Heart right ventricle (tissue), 16 donors: ENCODE measurements at regions of chr3 and their contacts with region 1.

Region 1: GRCh38 chr3:98901392-98902350 is at the start of gene DCBLD2:
- DNase-seq: peak; percentile 97 to 99
- ATAC-seq: peak; percentile 98 to 99 (median 99)
- H3K4me3 ChIP-seq: peak within 1 kb of the TSS; percentile 71 to 98 (median 90)
- H3K27ac ChIP-seq: peak within 1 kb of the TSS; percentile 82 to 96 (median 94)
- H3K4me1 ChIP-seq: peaks cover 0 to 47% (median 22%) of the 10 kb centered on the region in 9 donors
- H3K27me3 ChIP-seq: peaks cover 0 to 9% (median 0%) of the 10 kb centered on the region in 7 donors
- CTCF ChIP-seq: no peak
- total RNA-seq, gene DCBLD2: 24.6 to 97.4 (median 48.4) TPM

Region 2: GRCh38 chr3:98994128-98994762 is 92.6 kb after region 1 on chr3:
- intact Hi-C with region 1: loop called in 2 of 10 experiments (anchors 5 kb)
- DNase-seq: no peak
- ATAC-seq: peak in 2 of 8 donors; percentile 42
- H3K4me3 ChIP-seq: no peak overlapping the region
- H3K27ac ChIP-seq: no peak overlapping the region
- H3K4me1 ChIP-seq: no peaks in the 10 kb centered on the region
- H3K27me3 ChIP-seq: no peaks in the 10 kb centered on the region
- CTCF ChIP-seq: peak; percentile 48 to 81 (median 70)